Ascending aorta (tissue), 2 donors: ENCODE measurements at regions of chr2 and their contacts with region 1.

Region 1: DNA sequence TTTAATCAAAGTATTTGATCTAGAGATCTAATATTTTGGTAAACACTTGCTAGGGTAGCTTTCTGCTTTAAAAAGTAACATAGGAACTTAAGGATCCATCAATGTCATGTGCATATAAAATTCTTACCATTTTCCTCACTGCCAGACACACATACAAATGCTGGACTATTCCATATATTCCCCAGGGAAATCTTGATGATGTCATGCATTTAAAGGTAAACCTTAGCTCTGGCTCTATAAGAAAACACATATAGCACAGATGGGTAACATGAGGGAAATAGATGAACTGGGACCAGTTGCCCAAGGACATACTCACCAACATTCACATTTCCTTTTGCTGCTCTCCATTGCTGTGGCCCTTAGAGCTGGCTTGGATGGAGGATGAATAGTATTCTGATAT is 79.1 kb upstream of the FMNL2 start:
- DNase-seq: no peak
- H3K4me3 ChIP-seq: no peak overlapping the region
- H3K27ac ChIP-seq: no peak overlapping the region
- H3K4me1 ChIP-seq: no peaks in the 10 kb centered on the region
- H3K27me3 ChIP-seq: no peaks in the 10 kb centered on the region
- CTCF ChIP-seq: no peak

Region 2: GRCh38 chr2:152240559-152241231 is 15.2 kb before region 1 on chr2:
- intact Hi-C with region 1: loop called (anchors 1 kb)
- DNase-seq: no peak
- H3K4me3 ChIP-seq: no peak overlapping the region
- H3K27ac ChIP-seq: no peak overlapping the region
- H3K4me1 ChIP-seq: no peaks in the 10 kb centered on the region
- H3K27me3 ChIP-seq: no peaks in the 10 kb centered on the region
- CTCF ChIP-seq: no peak